ENCODE measurements at regions of chr5 and their contacts with region 1.

Region 1: GRCh38 chr5:142611154-142611553 is 74.7 kb downstream of the FGF1 start:
- DNase-seq: peak; percentile 21 to 68 (median 54)
- ATAC-seq: peak; percentile 86
- H3K4me3 ChIP-seq: no peak overlapping the region
- H3K4me3 Mint-ChIP-seq: no peak overlapping the region
- H3K27ac ChIP-seq: no peak overlapping the region
- H3K27ac Mint-ChIP-seq: no peak overlapping the region
- H3K4me1 ChIP-seq: no peaks in the 10 kb centered on the region
- H3K4me1 Mint-ChIP-seq: peaks cover 0 to 5% (median 2%) of the 10 kb centered on the region in 7 donors
- H3K27me3 ChIP-seq: no peaks in the 10 kb centered on the region
- H3K27me3 Mint-ChIP-seq: peaks cover 3 to 22% (median 11%) of the 10 kb centered on the region in 5 donors

Region 2: GRCh38 chr5:142644640-142645361 is 33.6 kb after region 1 on chr5:
- CTCF ChIA-PET with region 1: no interaction called
- POLR2A ChIA-PET with region 1: no interaction called
- intact Hi-C with region 1: no loop called
- DNase-seq: no peak
- ATAC-seq: no peak
- H3K4me3 ChIP-seq: no peak overlapping the region
- H3K4me3 Mint-ChIP-seq: no peak overlapping the region
- H3K27ac ChIP-seq: no peak overlapping the region
- H3K27ac Mint-ChIP-seq: no peak overlapping the region
- H3K4me1 ChIP-seq: no peaks in the 10 kb centered on the region
- H3K4me1 Mint-ChIP-seq: no peaks in the 10 kb centered on the region
- H3K27me3 ChIP-seq: no peaks in the 10 kb centered on the region
- H3K27me3 Mint-ChIP-seq: peaks cover 0 to 29% (median 8%) of the 10 kb centered on the region in 5 donors

Region 3: DNA sequence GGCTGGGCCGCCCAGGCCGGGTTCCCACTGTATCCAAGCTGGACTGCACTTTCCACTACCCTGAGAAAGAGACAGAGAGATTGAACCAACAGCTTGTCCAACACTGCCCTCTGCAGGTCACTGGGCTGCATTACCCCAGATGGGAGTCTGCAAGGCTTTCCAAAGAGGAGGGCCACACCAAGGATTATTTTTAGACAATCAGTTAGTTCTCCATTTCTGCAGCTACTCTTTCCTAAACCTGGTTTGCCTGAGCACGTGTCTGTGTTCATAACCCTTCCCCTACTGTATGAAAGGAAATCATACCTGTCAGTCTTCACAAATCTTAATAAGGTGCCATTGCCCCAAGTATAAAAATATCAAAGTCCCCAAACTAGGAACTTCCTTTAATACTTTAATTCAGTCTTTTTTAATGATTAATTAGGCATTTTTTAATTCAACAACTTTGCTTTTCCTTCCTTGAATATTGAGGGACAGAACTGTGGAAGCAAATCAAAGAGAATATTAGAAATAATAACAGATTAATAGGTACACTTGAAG is 88.1 kb after region 1 on chr5:
- CTCF ChIA-PET with region 1: interaction called, 3 read pairs
- POLR2A ChIA-PET with region 1: no interaction called
- intact Hi-C with region 1: loop called (anchors 1 kb)
- DNase-seq: peak; percentile 53 to 79 (median 68)
- ATAC-seq: peak; percentile 95
- H3K4me3 ChIP-seq: no peak overlapping the region
- H3K4me3 Mint-ChIP-seq: no peak overlapping the region
- H3K27ac ChIP-seq: no peak overlapping the region
- H3K27ac Mint-ChIP-seq: no peak overlapping the region
- H3K4me1 ChIP-seq: no peaks in the 10 kb centered on the region
- H3K4me1 Mint-ChIP-seq: peaks cover 0 to 10% (median 2%) of the 10 kb centered on the region in 7 donors
- H3K27me3 ChIP-seq: no peaks in the 10 kb centered on the region
- H3K27me3 Mint-ChIP-seq: peaks cover 0 to 19% (median 5%) of the 10 kb centered on the region in 5 donors

Region 4: GRCh38 chr5:142881076-142881783 is 270.1 kb after region 1 on chr5:
- CTCF ChIA-PET with region 1: no interaction called
- POLR2A ChIA-PET with region 1: no interaction called
- intact Hi-C with region 1: loop called (anchors 2 kb)
- DNase-seq: no peak
- ATAC-seq: peak; percentile 84
- H3K4me3 ChIP-seq: no peak overlapping the region
- H3K4me3 Mint-ChIP-seq: no peak overlapping the region
- H3K27ac ChIP-seq: no peak overlapping the region
- H3K27ac Mint-ChIP-seq: no peak overlapping the region
- H3K4me1 ChIP-seq: peaks cover 0 to 3% of the 10 kb centered on the region in 2 donors
- H3K4me1 Mint-ChIP-seq: peaks cover 0 to 11% (median 5%) of the 10 kb centered on the region in 7 donors
- H3K27me3 ChIP-seq: no peaks in the 10 kb centered on the region
- H3K27me3 Mint-ChIP-seq: no peaks in the 10 kb centered on the region

Region 5: GRCh38 chr5:142888469-142889085 is 277.4 kb after region 1 on chr5:
- CTCF ChIA-PET with region 1: no interaction called
- POLR2A ChIA-PET with region 1: no interaction called
- intact Hi-C with region 1: loop called in 1 of 2 experiments (anchors 1 kb)
- DNase-seq: peak in 4 of 9 donors; percentile 19 to 27 (median 24)
- ATAC-seq: peak; percentile 45
- H3K4me3 ChIP-seq: no peak overlapping the region
- H3K4me3 Mint-ChIP-seq: no peak overlapping the region
- H3K27ac ChIP-seq: no peak overlapping the region
- H3K27ac Mint-ChIP-seq: no peak overlapping the region
- H3K4me1 ChIP-seq: peaks cover 0 to 8% of the 10 kb centered on the region in 2 donors
- H3K4me1 Mint-ChIP-seq: peaks cover 0 to 16% (median 5%) of the 10 kb centered on the region in 7 donors
- H3K27me3 ChIP-seq: no peaks in the 10 kb centered on the region
- H3K27me3 Mint-ChIP-seq: no peaks in the 10 kb centered on the region

Measured in naive thymus-derived CD4-positive, alpha-beta T cell (primary cell).